ENCODE measurements at regions of chr17 and their contacts with region 1.

Region 1: DNA sequence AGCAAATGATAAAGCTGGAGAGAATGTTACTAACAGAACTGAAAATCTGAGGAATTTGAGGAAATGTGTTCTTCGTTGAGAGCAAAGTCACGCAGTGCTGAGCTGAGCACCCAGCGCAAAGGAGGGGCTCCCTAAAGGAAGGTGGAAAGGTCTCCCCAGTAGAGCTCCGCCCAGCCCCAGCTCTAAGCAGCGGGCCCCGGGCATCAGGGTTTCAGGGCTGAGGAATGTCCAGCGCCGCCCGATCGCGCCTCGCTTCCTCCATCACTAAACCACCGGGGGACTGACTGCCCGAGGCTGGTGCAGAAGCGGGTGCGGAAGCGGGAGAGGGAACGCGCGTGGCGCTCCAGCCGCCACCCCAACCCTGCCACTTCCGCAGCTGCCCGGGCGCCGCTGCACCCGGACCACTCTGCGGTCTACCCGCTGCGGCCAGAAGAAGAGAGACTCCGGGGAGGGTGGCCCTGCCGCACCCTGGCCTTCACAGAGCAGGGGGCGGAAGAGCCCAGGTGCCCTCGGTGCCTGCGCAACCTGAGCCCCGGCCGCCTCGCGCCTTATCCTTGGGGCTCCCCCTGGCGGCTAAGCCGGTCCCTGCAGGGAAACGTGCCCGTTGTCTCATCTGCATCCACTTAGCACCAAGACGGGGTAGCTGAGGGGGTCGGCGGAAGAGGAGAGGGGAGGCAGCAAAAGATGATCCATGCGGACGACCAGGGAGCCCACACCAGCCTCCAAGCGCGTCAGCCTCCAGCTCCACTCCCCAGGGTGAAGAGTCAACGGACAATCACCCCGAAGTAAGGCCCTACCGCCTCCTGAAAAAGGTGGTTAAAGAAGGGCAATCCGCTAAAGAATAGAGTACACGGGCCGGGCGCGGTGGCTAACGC is 12.4 kb upstream of the GUCY2D start:
- DNase-seq: peak; percentile 90
- H3K4me3 ChIP-seq: peak overlapping the region; percentile 68
- H3K27ac ChIP-seq: peak overlapping the region; percentile 55
- H3K4me1 ChIP-seq: peaks cover 13% of the 10 kb centered on the region
- CTCF ChIP-seq: peak; percentile 89

Region 2: GRCh38 chr17:7825206-7825990 is 164.6 kb before region 1 on chr17:
- CTCF ChIA-PET with region 1: no interaction called
- POLR2A ChIA-PET with region 1: no interaction called
- intact Hi-C with region 1: loop called (anchors 2 kb)
- DNase-seq: no peak
- H3K4me3 ChIP-seq: no peak overlapping the region
- H3K27ac ChIP-seq: no peak overlapping the region
- H3K4me1 ChIP-seq: no peaks in the 10 kb centered on the region
- CTCF ChIP-seq: peak; percentile 33; the same call in 1 of the 2 replicates

Region 3: DNA sequence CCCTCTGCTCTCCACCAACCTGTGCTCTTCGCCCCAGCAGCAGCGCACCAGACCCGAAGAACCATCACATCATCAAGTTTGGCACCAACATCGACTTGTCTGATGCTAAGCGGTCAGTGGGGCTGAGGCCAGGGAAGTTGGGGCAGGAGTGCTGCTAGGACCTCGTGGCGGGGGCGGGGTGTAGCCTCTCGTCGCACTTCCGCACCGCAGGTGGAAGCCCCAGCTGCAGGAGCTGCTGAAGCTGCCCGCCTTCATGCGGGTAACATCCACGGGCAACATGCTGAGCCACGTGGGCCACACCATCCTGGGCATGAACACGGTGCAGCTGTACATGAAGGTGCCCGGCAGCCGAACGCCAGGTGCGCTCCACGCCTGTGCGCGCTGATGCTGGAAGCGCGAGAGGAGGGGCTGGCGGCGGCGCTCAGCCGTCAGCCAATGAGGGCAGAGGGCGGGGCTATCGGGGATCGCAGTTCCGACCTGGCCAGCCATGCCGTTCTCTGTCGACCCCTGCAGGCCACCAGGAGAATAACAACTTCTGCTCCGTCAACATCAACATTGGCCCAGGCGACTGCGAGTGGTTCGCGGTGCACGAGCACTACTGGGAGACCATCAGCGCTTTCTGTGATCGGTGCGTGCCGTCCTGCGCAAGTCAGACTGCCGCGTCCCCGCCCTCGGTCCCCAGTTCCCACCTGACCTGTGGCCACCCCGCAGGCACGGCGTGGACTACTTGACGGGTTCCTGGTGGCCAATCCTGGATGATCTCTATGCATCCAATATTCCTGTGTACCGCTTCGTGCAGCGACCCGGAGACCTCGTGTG is 138.4 kb before region 1 on chr17:
- CTCF ChIA-PET with region 1: no interaction called
- POLR2A ChIA-PET with region 1: no interaction called
- intact Hi-C with region 1: no loop called
- DNase-seq: peak; percentile 95
- H3K4me3 ChIP-seq: peak overlapping the region; percentile 67
- H3K27ac ChIP-seq: peak overlapping the region; percentile 42
- H3K4me1 ChIP-seq: peaks cover 31% of the 10 kb centered on the region
- CTCF ChIP-seq: peak; percentile 88

Region 4: GRCh38 chr17:7915611-7916382 is 74.2 kb before region 1 on chr17 and contains the start of gene RNF227:
- CTCF ChIA-PET with region 1: interaction called, 4 read pairs
- POLR2A ChIA-PET with region 1: no interaction called
- intact Hi-C with region 1: loop called (anchors 1 kb)
- DNase-seq: peak; percentile 83
- H3K4me3 ChIP-seq: peak within 1 kb of the TSS; percentile 76
- H3K27ac ChIP-seq: peak within 1 kb of the TSS; percentile 70
- H3K4me1 ChIP-seq: peaks cover 39% of the 10 kb centered on the region
- CTCF ChIP-seq: no peak
- total RNA-seq, gene RNF227: 3.8 and 9.6 TPM in 2 replicates

Region 5: GRCh38 chr17:8041249-8041928 is 51.4 kb after region 1 on chr17:
- CTCF ChIA-PET with region 1: interaction called, 5 read pairs
- POLR2A ChIA-PET with region 1: interaction called, 3 read pairs
- intact Hi-C with region 1: loop called (anchors 1 kb)
- DNase-seq: peak; percentile 76
- H3K4me3 ChIP-seq: no peak overlapping the region
- H3K27ac ChIP-seq: no peak overlapping the region
- H3K4me1 ChIP-seq: no peaks in the 10 kb centered on the region
- CTCF ChIP-seq: peak; percentile 92

Region 6: GRCh38 chr17:8210761-8211458 is 220.9 kb after region 1 on chr17:
- CTCF ChIA-PET with region 1: no interaction called
- POLR2A ChIA-PET with region 1: no interaction called
- intact Hi-C with region 1: no loop called
- DNase-seq: no peak
- H3K4me3 ChIP-seq: peak overlapping the region; percentile 92
- H3K27ac ChIP-seq: peak overlapping the region; percentile 88
- H3K4me1 ChIP-seq: peaks cover 19% of the 10 kb centered on the region
- CTCF ChIP-seq: no peak

Measured in OCI-LY7 (cell line).